Sciatic nerve (tissue), 2 donors: ENCODE measurements at regions of chr22 and their contacts with region 1.

Region 1: GRCh38 chr22:41928593-41929417 is 2.2 kb upstream of the TNFRSF13C start:
- DNase-seq: no peak
- ATAC-seq: no peak

Region 2: GRCh38 chr22:40345801-40346177 is 1583.0 kb before region 1 on chr22:
- intact Hi-C with region 1: no loop called
- DNase-seq: peak; percentile 62
- ATAC-seq: peak; percentile 36

Region 3: DNA sequence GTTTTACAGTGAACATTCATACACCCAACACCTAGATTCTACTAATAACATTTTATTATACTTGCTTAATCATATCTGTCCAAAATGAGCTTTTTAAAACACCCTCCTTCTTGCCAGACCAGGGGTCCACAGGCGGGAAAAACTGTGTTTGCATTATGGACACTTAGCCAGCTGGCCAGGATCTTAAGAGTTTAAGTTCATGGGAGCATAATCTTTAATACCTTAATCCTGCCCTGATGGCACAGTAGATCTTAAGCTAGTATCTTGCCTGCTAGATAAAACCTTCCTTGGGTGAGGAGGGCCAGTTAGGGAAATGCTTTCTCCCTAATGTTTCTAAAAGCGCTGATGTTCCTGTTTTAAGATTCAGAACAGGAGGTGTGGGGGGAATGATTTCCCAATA is 141.5 kb before region 1 on chr22:
- intact Hi-C with region 1: no loop called
- DNase-seq: no peak
- ATAC-seq: no peak

Region 4: DNA sequence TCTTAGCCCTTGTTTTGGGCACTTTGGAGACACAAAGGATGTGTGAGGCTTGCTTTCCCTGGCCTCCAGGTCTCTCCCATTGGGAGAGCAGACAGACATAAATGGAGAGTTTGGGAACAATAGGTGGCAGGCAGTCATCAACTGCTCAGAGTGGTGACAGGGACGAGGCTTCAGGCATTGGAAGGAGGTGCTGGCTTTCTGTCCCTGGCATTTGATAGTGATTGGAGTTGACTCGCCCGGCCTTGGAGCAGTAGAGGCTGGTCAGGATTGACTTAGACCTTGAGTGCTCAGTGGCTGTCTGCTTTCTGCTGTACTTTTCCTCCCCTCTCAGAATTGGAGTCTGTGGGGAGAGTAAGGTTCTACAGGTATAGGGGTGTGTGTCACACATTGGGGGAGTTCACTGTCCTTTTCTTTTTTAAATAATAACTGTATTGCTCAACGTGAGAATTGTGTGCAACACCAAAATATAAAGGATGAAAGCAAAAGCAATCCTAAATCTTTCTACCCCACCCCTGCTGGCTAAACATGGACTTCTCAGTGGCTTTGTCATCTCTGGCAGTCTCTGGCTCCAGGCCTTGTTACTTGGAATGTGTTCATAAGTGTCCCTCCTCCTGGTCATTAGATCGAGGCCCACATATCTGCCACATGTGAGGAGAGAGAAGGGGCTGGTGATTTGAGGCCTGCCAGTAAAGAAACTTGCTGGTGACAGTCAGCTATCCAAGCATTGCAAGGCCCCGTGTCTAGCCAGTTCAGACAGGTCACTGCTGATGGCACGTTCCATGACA is 35.0 kb before region 1 on chr22:
- intact Hi-C with region 1: loop called (anchors 1 kb)
- DNase-seq: no peak
- ATAC-seq: no peak

Region 5: DNA sequence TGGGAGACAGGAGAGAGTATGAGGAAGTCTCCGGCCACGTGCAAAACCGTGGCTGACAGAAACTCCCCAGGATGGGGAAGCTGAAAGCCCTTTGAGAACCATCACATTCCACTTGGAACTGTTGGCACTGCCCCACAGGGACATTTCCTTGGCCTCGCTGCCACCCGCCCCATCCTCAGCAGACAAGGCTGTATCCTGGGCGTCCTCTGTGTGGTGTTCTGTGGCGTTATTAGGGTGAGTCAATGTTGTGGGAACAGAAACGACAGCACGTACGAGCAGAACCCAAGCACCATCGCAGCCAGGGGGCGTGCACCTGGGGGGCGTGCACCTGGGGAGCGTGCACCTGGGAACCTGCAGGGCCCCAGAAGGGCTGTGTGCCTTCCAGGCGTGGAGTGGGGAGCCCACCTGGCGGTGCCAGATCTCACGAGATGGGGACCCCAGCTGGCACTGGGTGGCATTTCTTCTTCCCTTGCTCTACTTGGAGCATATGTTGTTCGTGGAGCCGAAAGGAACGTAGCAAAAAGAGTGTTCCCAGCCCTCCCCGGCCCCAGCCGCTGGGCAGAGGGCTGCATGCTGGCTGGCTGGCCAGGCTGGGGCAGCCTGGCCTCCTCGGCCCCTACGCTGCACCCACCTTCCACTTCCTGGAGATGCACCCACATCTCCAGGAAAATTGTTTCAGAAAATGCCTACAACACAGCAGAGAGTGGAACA is 468.0 kb after region 1 on chr22:
- intact Hi-C with region 1: no loop called
- DNase-seq: no peak
- ATAC-seq: peak; percentile 43